ENCODE measurements at regions of chr4 and their contacts with region 1.

Region 1: GRCh38 chr4:8176547-8177399 is 18.2 kb upstream of the ABLIM2 start:
- DNase-seq: peak; percentile 62
- ATAC-seq: peak; percentile 96
- H3K4me3 Mint-ChIP-seq: no peak overlapping the region
- H3K27ac Mint-ChIP-seq: no peak overlapping the region
- H3K4me1 Mint-ChIP-seq: no peaks in the 10 kb centered on the region
- H3K27me3 Mint-ChIP-seq: no peaks in the 10 kb centered on the region
- CTCF ChIP-seq: peak; percentile 51; the same call in 1 of the 2 replicates

Region 2: DNA sequence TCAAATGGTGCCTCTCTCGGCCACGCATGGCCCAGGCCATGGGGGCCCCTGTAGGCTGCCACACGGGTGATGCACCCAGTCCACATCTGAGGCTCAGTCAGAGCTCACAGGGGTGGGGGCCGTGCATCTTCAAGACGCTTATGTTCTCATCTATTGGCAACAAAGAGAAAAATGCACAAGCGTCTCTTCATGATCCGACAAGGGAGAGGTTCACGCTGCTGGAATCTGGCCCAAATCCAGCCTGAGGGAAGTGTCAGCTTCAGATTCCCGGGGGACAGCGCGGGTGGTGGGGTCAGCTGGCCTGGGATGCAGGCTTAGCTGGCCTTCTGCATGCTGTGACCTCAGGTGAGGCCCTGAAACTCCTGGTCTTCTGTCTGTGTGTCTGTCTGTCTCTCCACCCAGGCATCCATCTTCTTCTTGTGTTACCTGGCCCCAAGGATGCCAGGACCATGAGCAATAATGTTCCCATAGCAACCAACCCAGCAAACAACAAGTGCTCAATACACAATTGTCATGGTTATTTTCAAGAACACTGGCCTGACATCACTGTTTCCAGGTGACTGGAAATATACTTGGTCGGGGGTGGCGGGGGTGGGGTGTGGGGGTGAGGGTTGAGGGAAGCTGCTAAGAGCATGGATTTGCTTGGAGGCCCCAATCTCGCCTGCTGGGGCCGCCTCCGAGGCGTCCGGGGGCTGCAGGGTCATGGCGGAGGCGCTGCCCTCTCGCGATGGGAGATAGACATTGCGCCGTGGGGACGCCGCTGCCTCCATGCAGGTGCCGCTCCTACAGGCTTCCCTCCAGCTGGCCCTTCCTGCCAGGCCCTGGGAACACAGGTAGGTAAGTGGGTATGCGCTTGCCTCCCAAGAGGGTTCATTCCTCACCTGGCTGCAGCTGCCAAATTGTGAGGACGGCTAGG is 66.4 kb before region 1 on chr4:
- CTCF ChIA-PET with region 1: interaction called, 21 read pairs
- POLR2A ChIA-PET with region 1: no interaction called
- DNase-seq: peak; percentile 83
- ATAC-seq: peak; percentile 87
- H3K4me3 Mint-ChIP-seq: no peak overlapping the region
- H3K27ac Mint-ChIP-seq: peak overlapping the region; percentile 73
- H3K4me1 Mint-ChIP-seq: peaks cover 24% of the 10 kb centered on the region
- H3K27me3 Mint-ChIP-seq: no peaks in the 10 kb centered on the region
- CTCF ChIP-seq: 0 out of 2 replicates have a peak, but pooled peaks have one; percentile 18

Region 3: DNA sequence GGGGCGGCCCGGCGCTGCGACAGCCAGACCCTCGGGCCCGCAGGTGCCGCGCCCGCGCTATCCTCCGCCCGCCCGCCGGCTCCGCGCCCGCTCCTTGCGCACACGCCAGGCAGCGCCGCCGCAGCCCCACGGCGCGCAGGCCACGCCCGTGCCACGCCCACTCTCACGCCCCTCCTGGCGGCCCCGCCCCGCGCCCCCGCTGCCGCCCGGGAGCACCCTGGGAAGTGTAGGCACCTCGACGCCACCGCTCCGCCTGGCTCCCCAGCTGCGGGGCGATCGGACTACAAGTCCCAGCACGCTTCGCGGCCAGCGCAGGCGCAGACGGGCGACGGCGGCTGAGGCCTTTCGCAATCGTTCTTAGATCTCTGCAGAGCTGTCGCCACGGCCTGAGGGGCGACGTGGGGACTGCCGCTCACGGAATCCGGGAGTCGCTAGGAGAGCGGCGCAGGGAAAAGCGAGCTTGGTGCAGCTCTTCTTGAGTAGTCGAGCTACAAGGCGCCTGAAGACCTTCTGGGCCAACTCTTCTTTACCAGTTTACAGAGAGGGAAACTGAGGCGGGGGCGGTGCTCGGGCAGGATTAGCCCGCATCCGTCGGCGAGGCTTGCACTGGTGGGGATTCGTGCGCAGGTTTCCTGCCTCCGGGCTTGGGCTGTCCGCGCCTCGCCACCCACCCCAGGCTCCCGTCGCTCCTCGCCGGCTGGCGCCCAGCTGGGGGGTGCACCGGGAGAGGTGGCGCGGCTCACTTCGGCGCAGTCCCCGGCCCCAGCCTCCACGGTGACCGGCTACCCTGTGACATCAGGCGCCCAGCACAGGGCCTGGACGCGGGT is 17.9 kb before region 1 on chr4 and contains the start of gene ABLIM2:
- CTCF ChIA-PET with region 1: interaction called, 15 read pairs
- POLR2A ChIA-PET with region 1: no interaction called
- DNase-seq: peak; percentile 99
- ATAC-seq: peak; percentile 95
- H3K4me3 Mint-ChIP-seq: peak within 1 kb of the TSS; percentile 99
- H3K27ac Mint-ChIP-seq: no peak within 1 kb of the TSS
- H3K4me1 Mint-ChIP-seq: peaks cover 11% of the 10 kb centered on the region
- H3K27me3 Mint-ChIP-seq: peaks cover 41% of the 10 kb centered on the region
- CTCF ChIP-seq: no peak
- total RNA-seq, gene ABLIM2: 2.6 to 3.9 TPM (median 2.8 TPM) in 3 replicates

Region 4: GRCh38 chr4:8215001-8215427 is 38.2 kb after region 1 on chr4:
- CTCF ChIA-PET with region 1: interaction called, 16 read pairs
- POLR2A ChIA-PET with region 1: no interaction called
- DNase-seq: no peak
- ATAC-seq: no peak; the same call in 1 of the 2 replicates
- H3K4me3 Mint-ChIP-seq: no peak overlapping the region
- H3K27ac Mint-ChIP-seq: no peak overlapping the region
- H3K4me1 Mint-ChIP-seq: peaks cover 4% of the 10 kb centered on the region; the same call in 1 of the 2 replicates
- H3K27me3 Mint-ChIP-seq: peaks cover under 1% of the 10 kb centered on the region; the same call in 1 of the 2 replicates
- CTCF ChIP-seq: no peak

Region 5: GRCh38 chr4:8267077-8267476 is 90.3 kb after region 1 on chr4:
- CTCF ChIA-PET with region 1: interaction called, 20 read pairs
- POLR2A ChIA-PET with region 1: no interaction called
- DNase-seq: peak; percentile 78
- ATAC-seq: peak; percentile 68
- H3K4me3 Mint-ChIP-seq: no peak overlapping the region
- H3K27ac Mint-ChIP-seq: no peak overlapping the region
- H3K4me1 Mint-ChIP-seq: peaks cover 7% of the 10 kb centered on the region; the same call in 1 of the 2 replicates
- H3K27me3 Mint-ChIP-seq: peaks cover 30% of the 10 kb centered on the region
- CTCF ChIP-seq: peak; percentile 65

Region 6: DNA sequence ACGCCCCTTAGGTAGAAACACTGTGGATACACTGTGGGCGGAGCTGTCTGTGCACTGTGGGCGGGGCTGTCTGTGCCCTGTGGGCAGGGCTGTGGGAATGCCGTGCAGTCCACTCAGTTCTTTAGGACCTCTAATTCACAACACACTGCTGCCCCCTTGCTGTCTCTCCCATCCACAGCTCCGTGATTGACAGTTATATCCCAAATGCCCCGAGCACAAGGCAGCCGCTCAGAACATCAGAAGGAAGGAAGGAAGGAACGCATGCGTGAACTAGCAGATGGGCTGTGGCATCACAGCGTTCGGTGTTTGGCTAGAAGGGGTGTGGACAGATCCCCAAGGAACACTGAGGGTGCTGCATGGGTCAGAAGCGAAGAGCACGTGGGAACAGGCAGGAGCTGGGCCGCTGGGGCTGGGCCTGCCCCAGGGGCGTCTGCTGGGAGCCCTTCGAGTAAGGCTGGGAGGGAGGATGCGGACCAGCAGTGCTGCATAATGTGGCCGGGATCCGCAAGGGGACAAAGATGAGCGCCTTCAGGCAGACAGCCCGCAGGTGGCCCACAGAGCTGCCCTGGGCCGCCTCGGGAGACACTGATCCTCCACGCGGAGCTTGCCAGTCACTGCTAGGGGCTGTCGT is 234.0 kb after region 1 on chr4:
- CTCF ChIA-PET with region 1: interaction called, 25 read pairs
- POLR2A ChIA-PET with region 1: no interaction called
- DNase-seq: peak; percentile 85
- ATAC-seq: peak; percentile 92
- H3K4me3 Mint-ChIP-seq: no peak overlapping the region
- H3K27ac Mint-ChIP-seq: peak overlapping the region; percentile 95
- H3K4me1 Mint-ChIP-seq: peaks cover 9% of the 10 kb centered on the region
- H3K27me3 Mint-ChIP-seq: peaks cover 2% of the 10 kb centered on the region; the same call in 1 of the 2 replicates
- CTCF ChIP-seq: no peak

Region 7: GRCh38 chr4:8568068-8568680 is 391.4 kb after region 1 on chr4:
- CTCF ChIA-PET with region 1: no interaction called
- POLR2A ChIA-PET with region 1: no interaction called
- DNase-seq: no peak
- ATAC-seq: peak; percentile 96
- H3K4me3 Mint-ChIP-seq: peak overlapping the region; percentile 3; the same call in 1 of the 2 replicates
- H3K27ac Mint-ChIP-seq: peak overlapping the region; percentile 96
- H3K4me1 Mint-ChIP-seq: peaks cover 36% of the 10 kb centered on the region
- H3K27me3 Mint-ChIP-seq: no peaks in the 10 kb centered on the region
- CTCF ChIP-seq: no peak

Measured in WTC11 (cell line).